GM12878 (cell line): ENCODE measurements at regions of chr2 and their contacts with region 1.

Region 1: GRCh38 chr2:224894356-224894755 is 147.9 kb downstream of the DOCK10 start:
- DNase-seq: peak; percentile 71
- ATAC-seq: peak; percentile 90
- H3K4me3 ChIP-seq: peak overlapping the region; percentile 13; the same call in 1 of the 2 replicates
- H3K27ac ChIP-seq: peak overlapping the region; percentile 88
- H3K4me1 ChIP-seq: peaks cover 40% of the 10 kb centered on the region
- H3K27me3 ChIP-seq: no peaks in the 10 kb centered on the region
- CTCF ChIP-seq: no peak
- EP300 ChIP-seq: no peak
- POLR2A ChIP-seq: no peak
- RAD21 ChIP-seq: no peak

Region 2: DNA sequence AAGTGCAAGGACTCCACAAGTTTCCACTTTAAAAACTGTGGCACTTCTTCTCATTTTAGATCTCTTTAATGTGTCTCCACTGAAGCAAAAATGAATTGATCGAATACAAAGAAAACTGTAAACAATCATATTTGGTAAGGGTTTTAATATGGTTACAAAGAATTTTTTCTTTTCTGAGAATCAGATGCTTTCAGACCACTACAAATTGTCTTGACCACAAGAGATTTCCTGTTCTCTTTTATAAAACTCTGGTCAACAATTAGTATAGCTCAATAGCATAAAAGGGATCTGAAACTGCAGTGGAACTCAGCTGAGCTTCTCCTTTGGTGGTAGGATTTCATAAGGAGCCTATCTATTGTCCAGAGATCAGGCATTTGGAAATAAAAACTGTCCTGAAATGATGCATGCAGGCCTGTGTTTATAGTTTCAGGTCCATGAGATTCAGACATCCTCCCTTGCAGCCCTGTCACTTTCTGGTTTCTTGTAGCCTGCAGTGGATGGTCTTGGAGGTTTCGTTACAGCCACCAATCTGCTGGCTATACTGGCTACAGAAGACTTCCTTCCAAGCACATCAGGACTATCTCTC is 27.9 kb after region 1 on chr2:
- CTCF ChIA-PET with region 1: interaction called, 11 read pairs
- POLR2A ChIA-PET with region 1: interaction called, 7 read pairs
- RAD21 ChIA-PET with region 1: interaction called, 17 read pairs
- SMC1A ChIA-PET with region 1: interaction called, 26 read pairs
- in situ Hi-C with region 1: no loop called
- intact Hi-C with region 1: loop called (anchors 2 kb)
- DNase-seq: peak; percentile 71
- ATAC-seq: peak; percentile 78
- H3K4me3 ChIP-seq: no peak overlapping the region
- H3K27ac ChIP-seq: peak overlapping the region; percentile 47
- H3K4me1 ChIP-seq: peaks cover 45% of the 10 kb centered on the region
- H3K27me3 ChIP-seq: no peaks in the 10 kb centered on the region
- CTCF ChIP-seq: no peak
- EP300 ChIP-seq: peak; percentile 36 to 89; a peak in 3 of 4 replicates
- POLR2A ChIP-seq: no peak
- RAD21 ChIP-seq: no peak